Thyroid gland (tissue), 4 donors: ENCODE measurements at regions of chr21 and their contacts with region 1.

Region 1: GRCh38 chr21:26041431-26042180 is 129.0 kb downstream of the APP start:
- DNase-seq: no peak
- H3K4me3 ChIP-seq: no peak overlapping the region
- H3K27ac ChIP-seq: no peak overlapping the region
- H3K4me1 ChIP-seq: peaks cover 0 to 7% of the 10 kb centered on the region in 2 donors
- H3K27me3 ChIP-seq: no peaks in the 10 kb centered on the region
- CTCF ChIP-seq: no peak
- POLR2A ChIP-seq: no peak

Region 2: DNA sequence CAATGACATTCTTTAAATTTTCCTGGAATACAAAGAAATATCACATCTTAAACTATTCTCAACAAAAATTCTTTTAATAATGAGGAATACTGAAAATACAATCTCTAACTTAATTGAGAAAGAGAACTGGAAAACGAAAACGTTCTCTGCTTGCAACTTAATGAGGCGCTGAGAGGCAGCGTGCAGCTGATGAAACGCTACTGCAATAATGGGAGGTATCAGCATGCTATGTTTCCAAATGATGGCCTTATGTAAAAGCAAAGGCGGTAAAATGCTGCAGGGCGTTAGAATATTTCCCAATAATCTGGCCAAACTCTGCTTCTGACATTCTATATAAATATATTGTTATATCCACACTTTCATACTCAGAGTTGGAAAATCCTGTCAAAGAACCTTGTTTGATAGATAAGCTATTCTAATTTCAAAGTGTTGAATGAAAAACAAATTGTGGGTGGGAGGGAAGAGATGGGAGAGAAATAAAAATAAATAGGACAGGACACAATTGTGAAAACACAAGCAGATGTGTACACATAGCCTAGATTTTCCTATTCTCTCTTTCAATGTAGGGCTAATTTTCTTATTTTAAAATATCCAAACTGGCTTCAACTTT is 58.1 kb after region 1 on chr21:
- intact Hi-C with region 1: loop called (anchors 10 kb)
- DNase-seq: no peak
- H3K4me3 ChIP-seq: no peak overlapping the region
- H3K27ac ChIP-seq: no peak overlapping the region
- H3K4me1 ChIP-seq: peaks cover 0 to 6% of the 10 kb centered on the region in 2 donors
- H3K27me3 ChIP-seq: no peaks in the 10 kb centered on the region
- CTCF ChIP-seq: no peak
- POLR2A ChIP-seq: no peak